ENCODE measurements at regions of chr1 and their contacts with region 1.

Region 1: GRCh38 chr1:207052911-207053769 is at the start of gene PFKFB2:
- DNase-seq: peak; percentile 98 to 99
- H3K4me3 ChIP-seq: peak within 1 kb of the TSS; percentile 93
- H3K27ac ChIP-seq: peak within 1 kb of the TSS; percentile 92
- H3K4me1 ChIP-seq: peaks cover 26% of the 10 kb centered on the region
- H3K27me3 ChIP-seq: no peaks in the 10 kb centered on the region
- CTCF ChIP-seq: no peak; the same call in 1 of the 2 replicates
- total RNA-seq, gene PFKFB2: 16.3 and 28.0 TPM in 2 replicates

Region 2: DNA sequence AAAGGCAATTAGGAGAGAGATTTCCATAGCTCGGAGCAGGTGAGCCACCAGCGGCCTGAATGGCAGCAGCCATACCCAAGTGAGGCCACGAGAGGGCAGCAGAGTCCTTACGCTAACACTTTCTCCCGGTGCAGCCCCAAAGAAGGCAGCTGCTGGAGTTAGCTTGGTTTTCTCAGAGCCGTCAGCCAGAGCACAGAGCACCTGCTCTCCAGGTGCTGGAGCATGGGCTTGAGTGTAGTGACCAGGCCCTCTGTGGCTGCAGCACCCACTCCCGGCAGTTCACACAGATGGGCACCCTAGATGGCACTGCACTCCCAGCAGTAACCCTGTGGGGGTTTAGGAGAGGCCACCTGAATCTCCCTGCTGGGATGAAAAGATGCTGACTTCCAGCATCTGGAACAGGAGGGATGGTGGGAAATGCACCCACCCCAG is 1779.6 kb before region 1 on chr1:
- CTCF ChIA-PET with region 1: no interaction called
- POLR2A ChIA-PET with region 1: no interaction called
- intact Hi-C with region 1: no loop called
- DNase-seq: peak; percentile 67 to 83
- H3K4me3 ChIP-seq: no peak overlapping the region
- H3K27ac ChIP-seq: no peak overlapping the region
- H3K4me1 ChIP-seq: peaks cover 5% of the 10 kb centered on the region
- H3K27me3 ChIP-seq: no peaks in the 10 kb centered on the region
- CTCF ChIP-seq: peak; percentile 97

Region 3: GRCh38 chr1:207004981-207005830 is 47.9 kb before region 1 on chr1:
- CTCF ChIA-PET with region 1: interaction called, 6 read pairs
- POLR2A ChIA-PET with region 1: interaction called, 6 read pairs
- intact Hi-C with region 1: loop called (anchors 1 kb)
- DNase-seq: peak; percentile 50 to 59
- H3K4me3 ChIP-seq: no peak overlapping the region
- H3K27ac ChIP-seq: peak overlapping the region; percentile 93
- H3K4me1 ChIP-seq: peaks cover 80% of the 10 kb centered on the region
- H3K27me3 ChIP-seq: no peaks in the 10 kb centered on the region
- CTCF ChIP-seq: peak; percentile 71

Region 4: GRCh38 chr1:207025144-207025880 is 27.8 kb before region 1 on chr1:
- CTCF ChIA-PET with region 1: interaction called, 5 read pairs
- POLR2A ChIA-PET with region 1: interaction called, 16 read pairs
- intact Hi-C with region 1: loop called (anchors 1 kb)
- DNase-seq: peak; percentile 80 to 90
- H3K4me3 ChIP-seq: no peak overlapping the region
- H3K27ac ChIP-seq: peak overlapping the region; percentile 97
- H3K4me1 ChIP-seq: peaks cover 90% of the 10 kb centered on the region
- H3K27me3 ChIP-seq: no peaks in the 10 kb centered on the region
- CTCF ChIP-seq: no peak

Region 5: DNA sequence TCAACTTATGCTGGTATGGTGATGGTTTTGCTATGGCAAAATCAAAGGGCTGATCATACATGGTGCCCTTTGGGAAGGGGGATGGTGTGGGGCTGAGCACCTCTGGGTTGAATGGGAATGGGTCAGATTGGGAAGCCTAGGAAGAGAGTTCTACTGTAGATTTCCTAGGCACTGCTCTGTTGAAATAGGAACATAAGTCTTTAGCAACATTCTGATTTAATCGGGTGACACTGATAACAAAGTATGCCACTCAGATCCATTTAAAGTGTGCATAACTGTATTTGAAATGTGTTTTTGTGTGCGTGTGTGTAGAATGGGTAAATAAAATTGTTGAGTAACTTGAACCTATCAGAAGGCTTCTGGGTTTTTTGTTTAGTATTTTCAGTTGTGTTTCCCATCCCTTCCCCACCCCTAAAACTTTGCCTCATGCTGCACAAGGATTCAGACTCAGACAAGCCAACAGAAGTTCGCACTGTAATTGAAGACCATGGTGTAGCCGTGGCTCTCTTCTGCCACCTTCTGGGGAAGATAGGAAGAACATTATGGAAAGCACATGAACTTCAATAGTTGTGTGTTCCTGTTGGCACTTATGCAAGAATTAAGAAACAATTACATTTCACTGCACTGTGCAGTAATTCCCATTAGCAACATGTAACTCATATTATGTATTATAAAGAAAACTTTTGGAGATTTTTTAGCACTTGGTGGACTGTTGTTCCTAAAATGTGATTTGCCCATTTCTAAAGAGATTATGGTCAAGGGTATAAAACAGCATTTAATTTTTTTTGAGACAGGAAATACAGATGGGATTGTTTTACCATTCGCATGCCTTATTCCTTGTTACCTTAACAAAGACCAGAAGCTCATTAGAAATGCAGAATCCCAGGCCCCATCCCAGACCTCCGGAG is 24.6 kb after region 1 on chr1:
- CTCF ChIA-PET with region 1: no interaction called
- POLR2A ChIA-PET with region 1: no interaction called
- intact Hi-C with region 1: loop called (anchors 1 kb)
- DNase-seq: peak; percentile 61 to 67
- H3K4me3 ChIP-seq: no peak overlapping the region
- H3K27ac ChIP-seq: no peak overlapping the region
- H3K4me1 ChIP-seq: no peaks in the 10 kb centered on the region
- H3K27me3 ChIP-seq: no peaks in the 10 kb centered on the region
- CTCF ChIP-seq: peak; percentile 95

Region 6: GRCh38 chr1:207328004-207328403 is 274.9 kb after region 1 on chr1:
- CTCF ChIA-PET with region 1: no interaction called
- POLR2A ChIA-PET with region 1: no interaction called
- intact Hi-C with region 1: no loop called
- DNase-seq: no peak
- H3K4me3 ChIP-seq: no peak overlapping the region
- H3K27ac ChIP-seq: no peak overlapping the region
- H3K4me1 ChIP-seq: peaks cover 10% of the 10 kb centered on the region
- H3K27me3 ChIP-seq: no peaks in the 10 kb centered on the region
- CTCF ChIP-seq: no peak

Region 7: DNA sequence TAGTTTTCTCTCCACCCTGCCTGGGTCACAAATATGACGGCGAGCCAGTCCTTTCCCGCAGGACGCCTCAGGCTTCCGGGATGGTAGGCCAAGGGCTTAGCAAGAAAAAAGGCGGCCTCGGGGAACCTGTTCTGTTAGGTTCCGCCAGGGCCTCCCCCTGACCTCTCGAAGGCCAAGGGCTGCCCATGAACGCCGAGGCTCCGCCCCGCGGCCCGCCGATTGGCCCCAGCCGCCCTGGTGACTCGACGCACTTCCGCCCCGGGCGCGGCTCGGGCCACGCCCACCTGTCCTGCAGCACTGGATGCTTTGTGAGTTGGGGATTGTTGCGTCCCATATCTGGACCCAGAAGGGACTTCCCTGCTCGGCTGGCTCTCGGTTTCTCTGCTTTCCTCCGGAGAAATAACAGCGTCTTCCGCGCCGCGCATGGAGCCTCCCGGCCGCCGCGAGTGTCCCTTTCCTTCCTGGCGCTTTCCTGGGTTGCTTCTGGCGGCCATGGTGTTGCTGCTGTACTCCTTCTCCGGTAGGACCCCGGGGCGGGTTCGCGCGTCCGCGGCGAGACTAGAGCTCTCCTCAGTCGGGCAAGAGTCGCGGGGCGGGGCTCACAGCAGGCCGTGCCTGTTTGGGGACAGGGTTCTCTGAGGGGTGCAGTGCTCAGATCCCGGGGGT is 698.8 kb after region 1 on chr1 and contains the start of gene CD46:
- CTCF ChIA-PET with region 1: no interaction called
- POLR2A ChIA-PET with region 1: no interaction called
- intact Hi-C with region 1: loop called (anchors 5 kb)
- DNase-seq: peak; percentile 97 to 98
- H3K4me3 ChIP-seq: peak within 1 kb of the TSS; percentile 91
- H3K27ac ChIP-seq: peak within 1 kb of the TSS; percentile 96
- H3K4me1 ChIP-seq: peaks cover 79% of the 10 kb centered on the region
- H3K27me3 ChIP-seq: no peaks in the 10 kb centered on the region
- CTCF ChIP-seq: no peak
- total RNA-seq, gene CD46: 149 and 214 TPM in 2 replicates

Measured in PC-9 (cell line).